ENCODE measurements at regions of chr16 and their contacts with region 1.

Region 1: DNA sequence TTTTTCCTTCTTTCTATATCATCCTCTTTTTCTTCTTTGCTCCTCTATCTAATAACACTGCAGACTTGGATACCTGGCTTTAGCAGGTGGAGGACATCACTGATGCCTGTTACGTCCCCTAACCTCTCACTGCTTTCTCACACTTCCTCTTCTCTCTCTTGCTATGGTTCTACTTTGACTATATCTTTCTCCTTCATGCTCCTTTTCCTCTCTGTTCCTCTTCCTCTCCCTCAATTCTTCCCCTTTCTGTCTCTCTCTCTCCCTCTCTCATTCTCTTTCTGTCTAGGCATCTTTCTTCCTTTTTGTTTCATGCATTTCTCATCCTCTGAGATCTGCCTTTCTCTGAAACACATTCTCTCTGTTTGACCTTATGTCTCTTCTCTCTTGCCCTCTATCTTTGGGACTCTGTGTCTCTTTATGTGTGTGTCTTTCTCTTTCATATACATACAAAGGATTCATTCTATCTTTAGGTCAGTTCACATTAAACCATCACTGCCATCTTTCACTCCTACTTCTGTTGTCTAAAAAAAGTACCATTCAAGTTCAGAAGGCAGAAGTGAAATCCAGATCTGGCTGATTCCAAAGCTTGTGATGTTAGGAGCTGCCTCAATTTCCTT is 353.7 kb downstream of the SHISA9 start:
- DNase-seq: peak; percentile 26
- H3K4me3 ChIP-seq: no peak overlapping the region
- H3K27ac ChIP-seq: no peak overlapping the region
- H3K4me1 ChIP-seq: peaks cover 20% of the 10 kb centered on the region
- CTCF ChIP-seq: no peak

Region 2: GRCh38 chr16:13176711-13177110 is 78.4 kb before region 1 on chr16:
- CTCF ChIA-PET with region 1: no interaction called
- POLR2A ChIA-PET with region 1: no interaction called
- intact Hi-C with region 1: no loop called
- DNase-seq: no peak
- H3K4me3 ChIP-seq: no peak overlapping the region
- H3K27ac ChIP-seq: no peak overlapping the region
- H3K4me1 ChIP-seq: peaks cover 5% of the 10 kb centered on the region
- CTCF ChIP-seq: no peak

Region 3: DNA sequence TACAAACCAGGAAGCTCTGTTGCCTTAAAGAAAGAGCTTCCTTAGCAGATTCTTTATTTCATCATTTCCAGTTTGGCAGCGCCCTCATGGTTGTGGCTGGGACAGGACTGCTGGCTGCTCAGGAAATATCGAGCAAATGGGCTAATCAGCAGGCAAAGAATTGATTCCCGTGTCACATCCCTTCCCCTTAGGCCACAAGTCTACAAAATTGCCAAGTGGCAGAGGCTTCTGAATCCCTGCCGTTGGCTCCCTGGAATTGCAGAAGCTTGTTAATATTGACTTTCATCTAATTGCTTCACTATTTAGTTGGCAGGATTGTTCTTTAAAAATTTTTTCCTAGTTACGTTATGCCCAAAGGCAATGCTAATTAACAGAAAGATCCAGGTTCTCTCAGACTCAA is 208.5 kb after region 1 on chr16:
- CTCF ChIA-PET with region 1: no interaction called
- POLR2A ChIA-PET with region 1: interaction called, 11 read pairs
- intact Hi-C with region 1: no loop called
- DNase-seq: no peak
- H3K4me3 ChIP-seq: no peak overlapping the region
- H3K27ac ChIP-seq: no peak overlapping the region
- H3K4me1 ChIP-seq: no peaks in the 10 kb centered on the region
- CTCF ChIP-seq: no peak